RWPE1 (cell line): ENCODE measurements at regions of chr20 and their contacts with region 1.

Region 1: DNA sequence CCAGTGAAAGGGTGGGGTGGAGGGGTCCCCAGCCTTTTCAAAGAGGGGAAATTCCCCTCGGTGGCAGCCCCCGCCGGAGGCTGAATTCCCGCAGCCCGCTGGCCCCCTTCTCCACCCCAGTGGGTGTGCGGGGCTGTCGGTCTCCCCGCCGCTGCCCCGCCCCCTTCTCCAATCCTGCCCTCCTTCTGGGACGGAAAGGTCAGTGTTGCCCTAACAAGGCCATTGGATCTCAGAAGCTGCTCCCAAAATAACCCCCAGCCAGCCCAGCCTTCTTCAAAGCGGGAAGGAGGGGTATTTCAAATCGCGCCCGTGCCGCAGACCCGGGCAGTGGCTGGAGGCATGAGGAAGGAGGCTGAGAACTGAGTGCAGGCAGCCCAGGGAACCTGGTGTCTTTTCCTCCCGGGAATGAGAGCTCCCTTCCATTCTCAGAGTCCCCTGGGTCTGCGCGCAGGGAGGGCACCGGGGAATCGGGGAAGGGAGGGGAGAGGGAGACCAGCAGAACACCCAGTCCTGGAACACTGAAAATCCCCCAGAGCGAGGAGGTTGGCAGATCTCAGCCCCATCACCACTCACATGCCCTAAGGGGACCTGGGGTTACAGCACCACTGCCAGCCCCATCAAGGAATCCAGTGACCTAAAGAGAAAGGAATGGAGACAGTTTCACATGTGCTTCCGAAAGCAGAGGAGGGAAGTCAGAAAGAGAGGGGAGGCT is at the start of gene JPH2:
- DNase-seq: peak; percentile 97
- H3K27ac ChIP-seq: peak within 1 kb of the TSS; percentile 95
- CTCF ChIP-seq: no peak

Region 2: DNA sequence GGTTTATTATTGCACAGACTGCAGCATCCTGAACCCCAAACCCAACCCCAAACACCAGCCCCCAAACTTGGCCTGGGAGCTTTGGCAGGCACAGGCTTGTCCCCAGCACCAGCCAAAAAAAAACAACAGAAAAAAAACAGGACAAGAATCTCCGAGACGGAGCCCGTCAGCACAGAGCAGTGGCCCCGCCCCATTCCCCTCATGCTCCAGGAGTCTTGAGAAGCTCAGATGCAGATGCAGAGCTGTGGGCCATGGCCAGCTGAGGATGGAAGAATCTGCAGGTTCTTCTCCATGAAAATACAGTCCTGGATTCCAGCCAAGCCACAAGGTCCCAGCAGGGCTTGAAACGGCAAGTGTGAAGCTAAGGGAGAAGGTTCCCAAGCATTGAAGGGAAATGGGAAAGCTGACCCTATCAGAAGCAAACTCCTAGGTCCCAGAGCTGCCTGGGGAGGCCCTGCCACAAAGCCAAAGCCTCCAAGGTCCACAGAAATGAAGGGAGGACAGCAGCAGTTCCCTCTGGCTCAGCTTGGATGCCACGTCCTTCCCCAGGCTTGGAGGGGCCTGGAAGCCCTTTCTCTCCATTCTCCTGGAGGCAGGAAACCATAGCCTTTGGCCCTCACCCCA is 75.4 kb before region 1 on chr20:
- CTCF ChIA-PET with region 1: interaction called, 196 read pairs
- POLR2A ChIA-PET with region 1: interaction called, 3 read pairs
- DNase-seq: peak; percentile 46
- H3K27ac ChIP-seq: peak overlapping the region; percentile 58
- CTCF ChIP-seq: no peak

Region 3: DNA sequence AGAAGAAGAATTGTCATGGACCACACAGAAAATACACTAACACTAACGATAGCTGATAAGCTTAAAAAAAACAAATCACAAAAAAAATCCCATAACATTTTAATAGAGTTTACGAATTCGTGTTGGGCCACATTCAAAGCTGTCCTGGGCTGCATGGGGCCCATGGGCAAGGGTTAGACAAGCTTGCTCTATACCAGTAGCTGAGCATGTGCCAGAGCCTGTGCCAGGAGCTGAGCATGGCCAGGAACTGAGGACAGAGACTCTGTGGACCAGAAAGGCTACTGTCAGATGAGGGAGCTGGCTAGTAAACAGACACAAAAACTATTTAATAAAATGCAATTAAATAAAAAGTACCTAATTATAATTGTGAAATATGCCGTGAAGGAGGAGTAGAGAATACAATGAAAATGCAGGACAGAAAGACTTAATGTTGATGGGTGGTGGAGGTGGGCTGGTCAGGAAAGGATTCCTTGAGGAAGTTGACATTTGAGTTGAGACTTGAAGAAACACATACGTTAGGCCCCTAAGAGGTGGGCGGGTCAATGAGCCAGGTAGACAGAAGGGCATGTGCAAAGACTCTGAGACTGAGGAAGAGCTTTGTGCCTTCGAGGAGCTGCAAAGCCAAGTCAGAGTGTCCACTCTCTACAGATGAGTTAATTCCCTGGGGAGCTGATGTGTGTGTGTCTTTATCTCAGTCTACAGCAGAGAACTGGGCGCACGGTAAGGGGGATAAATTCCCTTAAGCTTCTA is 66.4 kb before region 1 on chr20:
- CTCF ChIA-PET with region 1: interaction called, 196 read pairs
- POLR2A ChIA-PET with region 1: interaction called, 3 read pairs
- DNase-seq: no peak
- H3K27ac ChIP-seq: no peak overlapping the region
- CTCF ChIP-seq: no peak

Region 4: DNA sequence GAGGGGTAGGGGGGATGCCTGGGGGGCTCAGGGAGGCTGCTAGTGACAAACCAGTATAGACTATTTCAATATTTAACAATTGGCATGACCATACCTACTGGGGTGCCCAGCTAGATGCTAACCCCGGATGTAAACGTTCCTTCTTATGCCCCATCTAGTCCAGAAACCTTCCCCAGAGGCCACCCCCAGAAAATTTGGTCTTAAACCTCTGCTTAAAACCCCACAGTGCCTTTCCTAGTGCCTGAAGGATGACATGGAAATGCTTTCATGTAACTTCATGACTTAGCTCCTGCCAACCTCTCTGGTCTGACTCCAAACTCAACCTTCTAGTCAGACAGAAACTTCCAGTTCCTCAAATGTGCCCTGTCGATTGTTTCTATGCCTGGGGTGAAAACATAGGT is 52.2 kb before region 1 on chr20:
- CTCF ChIA-PET with region 1: interaction called, 10 read pairs
- POLR2A ChIA-PET with region 1: no interaction called
- DNase-seq: no peak
- H3K27ac ChIP-seq: no peak overlapping the region
- CTCF ChIP-seq: no peak

Region 5: DNA sequence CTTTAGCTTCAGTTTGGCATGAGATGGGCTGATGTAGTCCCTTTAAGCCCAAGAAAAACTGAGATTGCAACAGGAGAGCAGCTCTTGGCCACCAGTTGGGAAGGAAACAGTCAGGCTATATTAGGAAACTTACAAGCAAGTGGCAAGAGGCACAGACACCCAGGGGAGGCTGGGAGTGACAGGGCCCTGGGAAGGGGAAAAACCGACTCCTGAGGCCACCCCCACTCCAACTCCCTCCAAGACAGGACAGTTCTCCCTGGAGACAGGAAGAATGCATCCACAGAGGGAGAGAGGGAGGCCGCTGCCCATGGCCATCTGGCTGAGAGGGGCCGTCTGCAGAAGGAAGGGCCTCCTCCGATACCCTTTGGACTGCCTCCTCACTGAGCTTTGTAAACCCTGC is 20.7 kb before region 1 on chr20:
- CTCF ChIA-PET with region 1: interaction called, 12 read pairs
- POLR2A ChIA-PET with region 1: interaction called, 3 read pairs
- DNase-seq: no peak
- H3K27ac ChIP-seq: peak overlapping the region; percentile 77
- CTCF ChIP-seq: no peak

Region 6: GRCh38 chr20:44176833-44177534 is 10.2 kb before region 1 on chr20:
- CTCF ChIA-PET with region 1: interaction called, 19 read pairs
- POLR2A ChIA-PET with region 1: interaction called, 3 read pairs
- DNase-seq: peak; percentile 94
- H3K27ac ChIP-seq: peak overlapping the region; percentile 94
- CTCF ChIP-seq: no peak

Region 7: GRCh38 chr20:44247586-44248409 is 60.6 kb after region 1 on chr20:
- CTCF ChIA-PET with region 1: no interaction called
- POLR2A ChIA-PET with region 1: no interaction called
- DNase-seq: peak; percentile 74
- H3K27ac ChIP-seq: no peak overlapping the region
- CTCF ChIP-seq: no peak; the same call in 1 of the 2 replicates